ENCODE measurements at regions of chr11 and their contacts with region 1.

Region 1: GRCh38 chr11:69296890-69297786 is 3.2 kb downstream of the MYEOV start:
- DNase-seq: peak; percentile 64 to 92 (median 83)
- ATAC-seq: peak; percentile 61
- H3K4me3 ChIP-seq: peak overlapping the region; percentile 21 to 37
- H3K4me3 Mint-ChIP-seq: peak overlapping the region; percentile 72
- H3K27ac ChIP-seq: peak overlapping the region in 1 of 2 experiments; percentile 46
- H3K27ac Mint-ChIP-seq: peak overlapping the region; percentile 86
- H3K4me1 ChIP-seq: peaks cover 37% of the 10 kb centered on the region
- H3K4me1 Mint-ChIP-seq: peaks cover 53% of the 10 kb centered on the region
- H3K27me3 ChIP-seq: no peaks in the 10 kb centered on the region
- H3K27me3 Mint-ChIP-seq: no peaks in the 10 kb centered on the region
- CTCF ChIP-seq: no peak

Region 2: GRCh38 chr11:69101115-69101791 is 195.9 kb before region 1 on chr11:
- CTCF ChIA-PET with region 1: interaction called, 6 read pairs
- POLR2A ChIA-PET with region 1: no interaction called
- intact Hi-C with region 1: loop called in 1 of 2 experiments (anchors 1 kb)
- DNase-seq: peak; percentile 57 to 85 (median 70)
- ATAC-seq: peak; percentile 99
- H3K4me3 ChIP-seq: no peak overlapping the region
- H3K4me3 Mint-ChIP-seq: no peak overlapping the region
- H3K27ac ChIP-seq: no peak overlapping the region
- H3K27ac Mint-ChIP-seq: no peak overlapping the region
- H3K4me1 ChIP-seq: no peaks in the 10 kb centered on the region
- H3K4me1 Mint-ChIP-seq: peaks cover 4% of the 10 kb centered on the region
- H3K27me3 ChIP-seq: peaks cover 0 to 6% of the 10 kb centered on the region in 2 experiments
- H3K27me3 Mint-ChIP-seq: peaks cover 3% of the 10 kb centered on the region
- CTCF ChIP-seq: peak; percentile 95

Region 3: DNA sequence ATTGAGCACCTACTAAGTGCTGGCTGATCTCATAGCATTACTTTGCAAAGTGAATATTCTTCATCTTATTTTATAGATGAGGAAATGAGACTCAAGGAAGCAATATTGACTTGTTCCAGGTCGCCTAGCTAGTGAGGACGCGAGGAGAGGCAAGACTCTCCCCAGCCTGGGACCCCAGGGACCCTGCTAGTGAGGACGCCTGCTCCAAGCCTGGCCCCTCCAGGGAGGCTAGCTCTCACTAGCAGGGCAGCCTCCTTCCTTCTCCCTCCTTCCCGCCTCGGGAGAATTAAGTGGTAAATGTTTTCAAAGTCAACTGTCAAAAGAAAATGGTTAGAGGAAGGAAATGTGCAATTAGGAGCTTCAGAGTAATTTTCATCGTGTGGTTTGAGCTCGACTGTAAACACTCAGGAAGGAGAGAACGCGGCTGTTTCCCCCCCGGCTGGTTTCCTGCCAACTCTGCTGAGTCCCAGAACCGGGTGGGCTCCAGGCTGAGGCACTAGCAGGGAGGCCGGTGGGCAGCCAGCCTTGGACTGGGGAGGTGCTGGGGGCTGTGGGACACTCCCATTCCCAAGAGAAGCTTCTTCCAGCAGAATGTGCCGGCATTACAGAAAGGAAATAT is 14.7 kb after region 1 on chr11:
- CTCF ChIA-PET with region 1: interaction called, 10 read pairs
- POLR2A ChIA-PET with region 1: interaction called, 11 read pairs
- intact Hi-C with region 1: no loop called
- DNase-seq: peak in 8 of 9 experiments; percentile 25 to 71 (median 45)
- ATAC-seq: peak; percentile 56
- H3K4me3 ChIP-seq: peak overlapping the region in 1 of 2 experiments; percentile 10
- H3K4me3 Mint-ChIP-seq: peak overlapping the region; percentile 65
- H3K27ac ChIP-seq: peak overlapping the region in 1 of 2 experiments; percentile 25
- H3K27ac Mint-ChIP-seq: peak overlapping the region; percentile 89
- H3K4me1 ChIP-seq: peaks cover 25% of the 10 kb centered on the region
- H3K4me1 Mint-ChIP-seq: peaks cover 40% of the 10 kb centered on the region
- H3K27me3 ChIP-seq: no peaks in the 10 kb centered on the region
- H3K27me3 Mint-ChIP-seq: no peaks in the 10 kb centered on the region
- CTCF ChIP-seq: no peak

Region 4: GRCh38 chr11:69337211-69337721 is 40.1 kb after region 1 on chr11:
- CTCF ChIA-PET with region 1: interaction called, 4 read pairs
- POLR2A ChIA-PET with region 1: interaction called, 5 read pairs
- intact Hi-C with region 1: loop called (anchors 1 kb)
- DNase-seq: peak in 4 of 9 experiments; percentile 28 to 67 (median 56)
- ATAC-seq: peak; percentile 86
- H3K4me3 ChIP-seq: peak overlapping the region in 1 of 2 experiments; percentile 2
- H3K4me3 Mint-ChIP-seq: peak overlapping the region; percentile 62
- H3K27ac ChIP-seq: no peak overlapping the region
- H3K27ac Mint-ChIP-seq: peak overlapping the region; percentile 89
- H3K4me1 ChIP-seq: peaks cover 14% of the 10 kb centered on the region
- H3K4me1 Mint-ChIP-seq: peaks cover 40% of the 10 kb centered on the region
- H3K27me3 ChIP-seq: no peaks in the 10 kb centered on the region
- H3K27me3 Mint-ChIP-seq: no peaks in the 10 kb centered on the region
- CTCF ChIP-seq: no peak

Region 5: GRCh38 chr11:69567951-69568808 is 271.0 kb after region 1 on chr11:
- CTCF ChIA-PET with region 1: no interaction called
- POLR2A ChIA-PET with region 1: no interaction called
- intact Hi-C with region 1: no loop called
- DNase-seq: no peak
- ATAC-seq: no peak
- H3K4me3 ChIP-seq: no peak overlapping the region
- H3K4me3 Mint-ChIP-seq: no peak overlapping the region
- H3K27ac ChIP-seq: no peak overlapping the region
- H3K27ac Mint-ChIP-seq: no peak overlapping the region
- H3K4me1 ChIP-seq: no peaks in the 10 kb centered on the region
- H3K4me1 Mint-ChIP-seq: no peaks in the 10 kb centered on the region
- H3K27me3 ChIP-seq: no peaks in the 10 kb centered on the region
- H3K27me3 Mint-ChIP-seq: peaks cover 24% of the 10 kb centered on the region
- CTCF ChIP-seq: no peak

Region 6: GRCh38 chr11:69675811-69676371 is 378.8 kb after region 1 on chr11:
- CTCF ChIA-PET with region 1: interaction called, 4 read pairs
- POLR2A ChIA-PET with region 1: interaction called, 5 read pairs
- intact Hi-C with region 1: loop called in 1 of 2 experiments (anchors 1 kb)
- DNase-seq: no peak
- ATAC-seq: no peak
- H3K4me3 ChIP-seq: peak overlapping the region; percentile 68 to 100
- H3K4me3 Mint-ChIP-seq: peak overlapping the region; percentile 94
- H3K27ac ChIP-seq: no peak overlapping the region
- H3K27ac Mint-ChIP-seq: no peak overlapping the region
- H3K4me1 ChIP-seq: peaks cover 31% of the 10 kb centered on the region
- H3K4me1 Mint-ChIP-seq: peaks cover 26% of the 10 kb centered on the region
- H3K27me3 ChIP-seq: no peaks in the 10 kb centered on the region
- H3K27me3 Mint-ChIP-seq: peaks cover 2% of the 10 kb centered on the region
- CTCF ChIP-seq: no peak

Region 7: GRCh38 chr11:70191495-70192140 is 894.5 kb after region 1 on chr11:
- CTCF ChIA-PET with region 1: no interaction called
- POLR2A ChIA-PET with region 1: no interaction called
- intact Hi-C with region 1: loop called in 1 of 2 experiments (anchors 5 kb)
- DNase-seq: peak in 7 of 9 experiments; percentile 28 to 57 (median 52)
- ATAC-seq: peak; percentile 62
- H3K4me3 ChIP-seq: no peak overlapping the region
- H3K4me3 Mint-ChIP-seq: no peak overlapping the region
- H3K27ac ChIP-seq: no peak overlapping the region
- H3K27ac Mint-ChIP-seq: no peak overlapping the region
- H3K4me1 ChIP-seq: no peaks in the 10 kb centered on the region
- H3K4me1 Mint-ChIP-seq: peaks cover 2% of the 10 kb centered on the region
- H3K27me3 ChIP-seq: peaks cover 0 to 5% of the 10 kb centered on the region in 2 experiments
- H3K27me3 Mint-ChIP-seq: peaks cover 9% of the 10 kb centered on the region
- CTCF ChIP-seq: peak; percentile 16